ENCODE measurements at regions of chr3 and their contacts with region 1.

Region 1: GRCh38 chr3:36843065-36844051 is 79.0 kb upstream of the DCLK3 start:
- DNase-seq: peak in 8 of 9 experiments; percentile 7 to 69 (median 46)
- ATAC-seq: peak; percentile 88
- H3K4me3 ChIP-seq: no peak overlapping the region
- H3K4me3 Mint-ChIP-seq: peak overlapping the region; percentile 35
- H3K27ac ChIP-seq: peak overlapping the region in 1 of 2 experiments; percentile 33
- H3K27ac Mint-ChIP-seq: peak overlapping the region; percentile 62
- H3K4me1 ChIP-seq: peaks cover 17% of the 10 kb centered on the region
- H3K4me1 Mint-ChIP-seq: peaks cover 23% of the 10 kb centered on the region
- H3K27me3 ChIP-seq: no peaks in the 10 kb centered on the region
- H3K27me3 Mint-ChIP-seq: no peaks in the 10 kb centered on the region
- CTCF ChIP-seq: peak; percentile 73

Region 2: GRCh38 chr3:35965908-35966307 is 877.5 kb before region 1 on chr3:
- CTCF ChIA-PET with region 1: no interaction called
- POLR2A ChIA-PET with region 1: no interaction called
- intact Hi-C with region 1: loop called in 1 of 2 experiments (anchors 10 kb)
- DNase-seq: peak in 1 of 9 experiments; percentile 3
- ATAC-seq: no peak
- H3K4me3 ChIP-seq: no peak overlapping the region
- H3K4me3 Mint-ChIP-seq: no peak overlapping the region
- H3K27ac ChIP-seq: no peak overlapping the region
- H3K27ac Mint-ChIP-seq: no peak overlapping the region
- H3K4me1 ChIP-seq: no peaks in the 10 kb centered on the region
- H3K4me1 Mint-ChIP-seq: peaks cover 8% of the 10 kb centered on the region
- H3K27me3 ChIP-seq: no peaks in the 10 kb centered on the region
- H3K27me3 Mint-ChIP-seq: no peaks in the 10 kb centered on the region
- CTCF ChIP-seq: peak; percentile 41

Region 3: GRCh38 chr3:36729204-36730056 is 113.9 kb before region 1 on chr3:
- CTCF ChIA-PET with region 1: no interaction called
- POLR2A ChIA-PET with region 1: no interaction called
- intact Hi-C with region 1: loop called in 1 of 2 experiments (anchors 5 kb)
- DNase-seq: peak in 2 of 9 experiments; percentile 45 to 57
- ATAC-seq: peak; percentile 44
- H3K4me3 ChIP-seq: no peak overlapping the region
- H3K4me3 Mint-ChIP-seq: no peak overlapping the region
- H3K27ac ChIP-seq: no peak overlapping the region
- H3K27ac Mint-ChIP-seq: no peak overlapping the region
- H3K4me1 ChIP-seq: no peaks in the 10 kb centered on the region
- H3K4me1 Mint-ChIP-seq: no peaks in the 10 kb centered on the region
- H3K27me3 ChIP-seq: no peaks in the 10 kb centered on the region
- H3K27me3 Mint-ChIP-seq: peaks cover 4% of the 10 kb centered on the region
- CTCF ChIP-seq: peak; percentile 41

Region 4: DNA sequence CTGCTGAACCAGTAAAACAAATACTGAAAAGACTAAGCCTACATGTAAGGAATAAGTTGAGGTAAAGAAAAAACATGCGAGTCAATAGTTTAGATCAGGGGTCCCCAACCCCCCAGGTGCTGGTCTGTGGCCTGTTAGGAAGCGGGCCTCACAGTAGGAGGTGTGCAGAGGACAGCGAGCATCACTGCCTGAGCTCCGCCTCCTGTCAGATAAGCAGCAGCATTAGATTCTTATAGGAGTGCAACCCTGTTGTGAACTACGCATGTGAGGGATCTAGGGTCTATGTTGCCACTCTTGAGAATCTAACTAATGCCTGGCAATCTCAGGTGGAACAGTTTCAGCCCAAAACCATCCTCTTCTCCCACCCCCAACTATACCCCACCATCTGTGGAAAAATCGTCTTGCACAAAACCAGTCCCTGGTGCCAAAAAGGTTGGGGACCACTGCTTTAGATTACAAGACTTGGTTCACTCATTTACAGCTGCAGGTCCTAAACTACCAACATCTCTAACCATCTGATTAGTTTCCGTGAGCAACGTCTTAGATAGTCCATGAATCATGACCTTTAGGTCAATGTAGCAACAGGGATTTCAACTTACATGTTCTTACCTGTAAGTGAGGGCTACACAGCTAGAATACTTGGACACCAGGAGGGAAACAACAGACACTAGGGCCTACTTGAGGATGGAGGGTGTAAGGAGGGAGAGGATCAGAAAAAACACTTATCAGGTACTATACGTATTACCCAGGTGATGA is 34.8 kb after region 1 on chr3:
- CTCF ChIA-PET with region 1: no interaction called
- POLR2A ChIA-PET with region 1: no interaction called
- intact Hi-C with region 1: no loop called
- DNase-seq: peak in 1 of 9 experiments; percentile 26
- ATAC-seq: no peak
- H3K4me3 ChIP-seq: no peak overlapping the region
- H3K4me3 Mint-ChIP-seq: no peak overlapping the region
- H3K27ac ChIP-seq: peak overlapping the region in 1 of 2 experiments; percentile 91
- H3K27ac Mint-ChIP-seq: peak overlapping the region; percentile 85
- H3K4me1 ChIP-seq: peaks cover 42% of the 10 kb centered on the region
- H3K4me1 Mint-ChIP-seq: peaks cover 58% of the 10 kb centered on the region
- H3K27me3 ChIP-seq: no peaks in the 10 kb centered on the region
- H3K27me3 Mint-ChIP-seq: no peaks in the 10 kb centered on the region
- CTCF ChIP-seq: no peak